Left colon (tissue), 2 donors: ENCODE measurements at regions of chr7 and their contacts with region 1.

Region 1: GRCh38 chr7:50418086-50418515 is 32.0 kb downstream of the FIGNL1 start:
- DNase-seq: peak; percentile 61 to 80
- ATAC-seq: peak; percentile 92

Region 2: DNA sequence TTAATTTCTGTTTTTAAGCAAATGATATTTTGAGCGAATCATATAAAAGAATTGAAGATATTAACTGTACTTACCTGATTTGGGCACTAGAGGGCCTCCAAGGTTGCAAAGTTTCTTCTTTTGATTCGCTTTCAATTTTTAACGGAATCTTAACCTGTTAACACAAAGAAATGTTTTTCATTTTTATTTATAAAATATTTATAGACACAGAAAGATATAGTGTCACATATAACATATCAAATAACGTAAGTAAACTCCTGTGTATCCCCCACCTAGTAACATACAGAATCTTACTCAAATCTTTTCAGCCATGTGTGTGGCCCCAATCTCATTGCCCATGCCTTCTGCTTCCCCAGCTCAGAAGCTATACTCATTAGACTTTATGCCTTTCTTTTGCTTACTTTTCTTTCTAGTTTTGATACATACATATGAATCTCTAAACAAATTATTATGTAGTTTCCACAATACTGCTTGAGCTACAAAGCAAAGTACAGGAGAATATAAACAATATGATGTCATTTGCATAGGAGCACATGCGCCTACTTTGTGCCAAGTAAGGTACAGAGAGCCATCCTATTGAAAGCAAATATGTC is 275.6 kb before region 1 on chr7:
- intact Hi-C with region 1: loop called in 1 of 2 experiments (anchors 5 kb)
- DNase-seq: no peak
- ATAC-seq: no peak

Region 3: GRCh38 chr7:50349963-50350944 is 67.8 kb before region 1 on chr7:
- intact Hi-C with region 1: loop called in 1 of 2 experiments (anchors 10 kb)
- DNase-seq: no peak
- ATAC-seq: no peak